Activated CD4-positive, alpha-beta T cell treated with anti-CD3 and anti-CD28 coated beads, Interleukin-2, amount 10 ng/mL, durations not matched to agents 7 days and 5 days (primary cell): ENCODE measurements at regions of chr20 and their contacts with region 1.

Region 1: DNA sequence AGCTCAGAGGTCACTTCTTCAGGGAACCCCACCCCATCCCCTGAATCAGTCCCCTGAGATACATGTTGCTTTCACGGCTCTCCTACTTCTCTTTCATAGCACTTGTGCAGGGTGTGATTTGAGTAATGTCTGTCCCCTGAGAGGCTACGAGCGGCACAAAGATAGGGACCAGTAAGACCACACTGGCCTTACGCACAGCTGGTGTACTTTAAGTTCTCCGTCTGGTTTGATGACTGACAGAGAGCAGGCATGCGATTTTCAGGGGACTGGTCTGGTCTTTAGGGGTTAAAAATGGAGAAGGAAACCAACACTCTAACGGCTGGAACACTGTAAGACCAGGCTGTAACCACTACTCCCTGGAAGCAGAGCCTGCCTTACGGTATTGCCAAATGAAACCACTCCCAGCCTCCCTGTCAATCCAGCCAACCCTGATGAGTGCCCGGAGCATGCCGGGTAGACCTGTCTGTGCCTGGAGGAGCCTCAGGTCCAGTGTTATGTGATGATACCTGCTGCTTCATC is 47.1 kb downstream of the ELMO2 start:
- DNase-seq: no peak
- H3K4me3 Mint-ChIP-seq: no peak overlapping the region
- H3K27ac Mint-ChIP-seq: peak overlapping the region; percentile 56
- H3K4me1 Mint-ChIP-seq: peaks cover 51% of the 10 kb centered on the region
- H3K27me3 Mint-ChIP-seq: no peaks in the 10 kb centered on the region

Region 2: GRCh38 chr20:46349035-46349741 is 10.1 kb before region 1 on chr20:
- CTCF ChIA-PET with region 1: interaction called, 17 read pairs
- POLR2A ChIA-PET with region 1: no interaction called
- DNase-seq: peak; percentile 61
- H3K4me3 Mint-ChIP-seq: no peak overlapping the region
- H3K27ac Mint-ChIP-seq: peak overlapping the region; percentile 31
- H3K4me1 Mint-ChIP-seq: peaks cover 17% of the 10 kb centered on the region
- H3K27me3 Mint-ChIP-seq: no peaks in the 10 kb centered on the region